Activated T-helper 1 cell treated with anti-CD3 and anti-CD28 coated beads, Interleukin-12 subunit alpha, Interleukin-12 subunit beta, Interleukin-2, Interleukin-4 antibody, amounts not matched to agents 30 ng/mL and 10 ng/mL and 1 ng/mL, durations not matched to agents 14 hours and 24 hours and 36 hours (primary cell): ENCODE measurements at regions of chr19 and their contacts with region 1.

Region 1: DNA sequence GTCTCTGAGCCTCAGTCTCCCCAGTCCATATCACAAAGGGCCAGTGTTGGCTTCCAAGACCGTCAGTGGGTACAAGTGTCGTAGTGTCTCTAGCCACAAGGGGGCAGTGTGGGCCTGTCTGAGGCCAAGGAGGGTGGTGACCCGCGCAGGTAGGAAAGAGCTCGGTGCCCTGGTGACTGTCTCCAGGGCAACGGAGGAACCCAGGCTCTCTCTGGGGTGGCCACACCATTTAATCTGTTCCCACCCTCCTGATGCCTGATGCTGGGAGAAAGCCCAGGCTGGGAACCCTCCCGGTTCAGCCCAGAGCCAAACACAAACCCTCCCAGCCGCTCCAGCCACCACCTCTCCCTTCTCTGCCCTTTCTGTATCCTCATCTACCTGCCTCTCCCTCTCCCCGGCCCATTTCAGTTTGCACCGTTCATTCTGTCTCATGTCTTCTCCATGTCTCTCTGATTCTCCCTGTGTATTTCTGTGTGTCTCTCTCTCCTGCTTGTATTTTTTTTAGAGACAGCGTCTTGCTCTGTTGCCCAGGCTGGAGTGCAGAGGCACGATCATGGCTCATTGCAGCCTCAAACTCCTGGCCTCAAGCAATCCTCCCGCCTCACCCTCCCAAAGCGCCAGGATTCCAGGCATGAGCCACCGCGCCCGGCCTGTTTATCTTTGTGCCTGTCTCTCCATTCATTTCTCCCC is 17.5 kb upstream of the MEIS3 start:
- DNase-seq: peak; percentile 74
- H3K4me3 Mint-ChIP-seq: no peak overlapping the region
- H3K27ac Mint-ChIP-seq: no peak overlapping the region
- H3K4me1 Mint-ChIP-seq: peaks cover 32% of the 10 kb centered on the region
- H3K27me3 Mint-ChIP-seq: peaks cover 12% of the 10 kb centered on the region

Region 2: GRCh38 chr19:47483800-47484690 is 47.2 kb after region 1 on chr19 and contains the start of gene KPTN:
- intact Hi-C with region 1: loop called (anchors 1 kb)
- DNase-seq: peak; percentile 86
- H3K4me3 Mint-ChIP-seq: peak within 1 kb of the TSS; percentile 99
- H3K27ac Mint-ChIP-seq: peak within 1 kb of the TSS; percentile 99
- H3K4me1 Mint-ChIP-seq: peaks cover 23% of the 10 kb centered on the region
- H3K27me3 Mint-ChIP-seq: peaks cover 4% of the 10 kb centered on the region
- total RNA-seq, gene KPTN: 9.6 and 10.8 TPM in 2 replicates

Region 3: DNA sequence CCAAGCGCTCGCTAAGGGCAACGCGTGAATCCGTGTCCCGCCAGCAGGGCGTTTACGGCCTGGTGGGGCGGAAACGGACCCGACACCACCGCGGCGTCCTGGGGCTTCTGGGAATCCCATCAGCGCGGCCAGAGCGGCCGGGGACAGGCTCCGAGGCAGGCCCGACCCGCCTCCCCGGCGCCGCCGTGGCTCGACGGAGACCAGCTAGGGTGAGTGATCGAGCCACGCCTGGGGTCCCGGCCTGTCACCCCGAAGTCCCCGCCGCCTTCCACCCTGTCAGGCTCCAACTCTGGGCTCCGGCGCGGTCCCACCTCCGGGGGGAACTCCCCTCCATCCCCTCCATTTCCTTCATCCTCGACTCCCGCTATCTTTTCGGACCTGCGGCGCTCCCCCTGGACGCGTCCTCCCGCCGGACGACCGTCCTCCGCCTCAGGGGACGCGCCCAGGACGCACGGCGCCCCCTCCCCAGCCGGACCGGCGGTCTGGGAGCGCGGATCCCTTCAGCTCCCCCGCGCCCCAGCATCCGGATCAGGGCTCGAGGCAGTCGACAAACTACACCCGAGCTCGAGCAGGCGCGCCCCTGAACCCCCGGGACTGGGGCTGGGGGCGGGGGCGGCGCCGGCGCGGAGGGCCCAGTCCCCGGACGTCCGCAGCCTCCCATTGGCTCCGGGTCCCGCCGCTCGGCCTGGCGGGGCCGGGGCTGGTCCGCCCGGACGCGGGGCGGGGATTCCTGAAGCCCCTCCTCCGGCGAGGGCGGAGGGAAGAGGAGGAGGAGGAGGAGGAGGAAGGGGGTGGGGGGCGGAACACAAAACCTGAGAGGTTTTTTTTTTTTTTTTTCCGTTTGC is 171.4 kb after region 1 on chr19:
- intact Hi-C with region 1: loop called (anchors 5 kb)
- DNase-seq: peak; percentile 97
- H3K4me3 Mint-ChIP-seq: peak overlapping the region; percentile 87
- H3K27ac Mint-ChIP-seq: peak overlapping the region; percentile 62
- H3K4me1 Mint-ChIP-seq: peaks cover 23% of the 10 kb centered on the region
- H3K27me3 Mint-ChIP-seq: no peaks in the 10 kb centered on the region

Region 4: GRCh38 chr19:47697863-47698609 is 261.2 kb after region 1 on chr19:
- intact Hi-C with region 1: loop called (anchors 1 kb)
- DNase-seq: peak; percentile 38
- H3K4me3 Mint-ChIP-seq: no peak overlapping the region
- H3K27ac Mint-ChIP-seq: peak overlapping the region; percentile 23
- H3K4me1 Mint-ChIP-seq: no peaks in the 10 kb centered on the region
- H3K27me3 Mint-ChIP-seq: no peaks in the 10 kb centered on the region

Region 5: DNA sequence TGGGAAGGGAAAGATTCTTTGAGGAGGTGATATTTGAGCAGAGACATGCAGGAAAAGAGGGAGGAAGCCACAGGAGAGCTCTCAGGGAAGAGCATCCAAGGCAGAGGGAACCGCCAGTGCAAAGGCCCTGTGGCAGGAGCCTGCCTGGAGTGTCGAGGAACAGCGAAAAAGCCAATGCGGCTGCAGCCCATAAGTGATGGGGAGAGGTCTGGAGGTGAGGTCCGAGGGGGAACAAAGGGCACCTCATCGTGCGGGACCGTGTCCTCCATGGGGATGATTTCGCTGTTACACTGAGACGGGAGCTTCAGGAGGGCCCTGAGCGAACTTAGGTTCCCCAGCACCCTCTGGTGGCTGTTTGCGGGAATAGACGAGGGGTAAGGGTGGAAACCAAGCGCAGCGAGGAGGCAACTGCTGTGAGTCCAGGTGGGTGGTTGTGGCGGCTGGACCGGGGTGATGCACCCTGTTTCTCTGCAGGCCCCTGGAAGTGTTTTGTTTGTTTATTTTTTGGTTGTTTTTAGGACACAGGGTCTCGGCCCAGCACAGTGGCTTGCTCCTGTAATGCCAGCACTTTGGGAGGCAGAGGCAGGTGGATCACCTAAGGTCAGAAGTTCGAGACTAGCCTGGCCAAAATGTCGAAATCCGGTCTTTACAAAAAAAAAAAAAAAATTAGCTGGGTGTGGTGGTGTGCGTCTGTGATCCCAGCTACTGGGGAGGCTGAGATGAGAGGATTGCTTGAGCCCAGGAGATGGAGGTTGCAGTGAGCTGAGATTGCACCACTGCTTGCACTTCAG is 270.5 kb after region 1 on chr19:
- intact Hi-C with region 1: loop called (anchors 1 kb)
- DNase-seq: peak; percentile 57
- H3K4me3 Mint-ChIP-seq: no peak overlapping the region
- H3K27ac Mint-ChIP-seq: no peak overlapping the region
- H3K4me1 Mint-ChIP-seq: no peaks in the 10 kb centered on the region
- H3K27me3 Mint-ChIP-seq: peaks cover 2% of the 10 kb centered on the region